Activated T-helper 2 cell treated with anti-CD3 and anti-CD28 coated beads, Interferon-gamma antibody, Interleukin-2, Interleukin-4, amounts not matched to agents 10 μg/mL and 5 μg/mL and 100 μg/mL, durations not matched to agents 14 hours and 24 hours and 36 hours (primary cell): ENCODE measurements at regions of chr14 and their contacts with region 1.

Region 1: DNA sequence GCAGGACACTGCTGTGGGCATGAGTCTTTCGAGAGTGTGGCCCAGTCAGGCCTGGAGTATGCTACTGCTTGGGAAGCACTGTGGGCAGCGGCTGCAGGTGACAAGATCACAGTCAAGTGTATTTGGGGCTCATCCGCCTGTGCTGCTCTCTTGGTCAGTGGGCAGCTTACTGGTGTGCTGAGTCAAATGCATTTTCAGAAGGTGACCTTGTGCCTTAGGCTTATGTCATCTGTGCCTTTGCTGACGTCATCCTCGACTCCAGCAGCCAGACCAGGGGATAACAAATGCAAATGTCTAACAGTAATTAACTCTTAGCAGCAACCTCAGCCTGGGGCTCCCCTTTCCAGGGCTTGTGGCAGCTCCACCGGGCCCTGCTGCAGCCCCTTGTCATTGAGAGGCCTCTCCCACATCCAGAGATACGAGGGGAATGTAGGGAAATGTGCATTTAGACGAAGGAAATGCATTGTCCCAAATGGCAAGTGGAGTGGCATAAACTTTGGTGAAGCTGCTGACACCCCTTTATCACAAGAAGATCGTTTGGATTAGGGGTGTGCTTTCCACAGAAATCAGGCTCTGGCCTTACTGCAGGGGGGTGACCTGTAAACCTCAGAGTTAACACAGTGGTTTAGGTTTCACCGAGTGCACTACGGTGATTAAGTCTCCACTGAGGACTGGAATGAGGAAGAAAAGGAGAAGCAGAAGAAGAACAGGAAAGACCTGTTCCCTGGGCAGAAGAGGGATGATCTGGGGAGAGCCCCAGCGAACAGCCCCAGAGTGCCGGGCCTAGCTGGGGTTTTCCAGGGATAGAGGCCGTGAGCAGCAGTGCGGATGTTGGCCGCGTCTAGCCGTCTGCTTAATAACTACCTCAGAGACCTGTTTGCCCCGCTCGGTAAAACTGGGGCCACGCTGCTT is 39.7 kb downstream of the PSMA6 start:
- DNase-seq: no peak
- H3K4me3 Mint-ChIP-seq: no peak overlapping the region
- H3K27ac Mint-ChIP-seq: peak overlapping the region; percentile 96
- H3K4me1 Mint-ChIP-seq: peaks cover 32% of the 10 kb centered on the region
- H3K27me3 Mint-ChIP-seq: no peaks in the 10 kb centered on the region

Region 2: GRCh38 chr14:35285168-35286002 is 46.5 kb before region 1 on chr14:
- intact Hi-C with region 1: loop called (anchors 1 kb)
- DNase-seq: no peak
- H3K4me3 Mint-ChIP-seq: peak overlapping the region; percentile 55
- H3K27ac Mint-ChIP-seq: peak overlapping the region; percentile 82
- H3K4me1 Mint-ChIP-seq: peaks cover 41% of the 10 kb centered on the region
- H3K27me3 Mint-ChIP-seq: no peaks in the 10 kb centered on the region

Region 3: GRCh38 chr14:35320472-35320871 is 11.4 kb before region 1 on chr14:
- intact Hi-C with region 1: loop called (anchors 1 kb)
- DNase-seq: no peak
- H3K4me3 Mint-ChIP-seq: no peak overlapping the region
- H3K27ac Mint-ChIP-seq: no peak overlapping the region
- H3K4me1 Mint-ChIP-seq: peaks cover 4% of the 10 kb centered on the region
- H3K27me3 Mint-ChIP-seq: no peaks in the 10 kb centered on the region

Region 4: GRCh38 chr14:35355981-35356841 is 24.4 kb after region 1 on chr14:
- intact Hi-C with region 1: loop called (anchors 1 kb)
- DNase-seq: no peak
- H3K4me3 Mint-ChIP-seq: peak overlapping the region; percentile 0
- H3K27ac Mint-ChIP-seq: peak overlapping the region; percentile 87
- H3K4me1 Mint-ChIP-seq: peaks cover 29% of the 10 kb centered on the region
- H3K27me3 Mint-ChIP-seq: no peaks in the 10 kb centered on the region

Region 5: DNA sequence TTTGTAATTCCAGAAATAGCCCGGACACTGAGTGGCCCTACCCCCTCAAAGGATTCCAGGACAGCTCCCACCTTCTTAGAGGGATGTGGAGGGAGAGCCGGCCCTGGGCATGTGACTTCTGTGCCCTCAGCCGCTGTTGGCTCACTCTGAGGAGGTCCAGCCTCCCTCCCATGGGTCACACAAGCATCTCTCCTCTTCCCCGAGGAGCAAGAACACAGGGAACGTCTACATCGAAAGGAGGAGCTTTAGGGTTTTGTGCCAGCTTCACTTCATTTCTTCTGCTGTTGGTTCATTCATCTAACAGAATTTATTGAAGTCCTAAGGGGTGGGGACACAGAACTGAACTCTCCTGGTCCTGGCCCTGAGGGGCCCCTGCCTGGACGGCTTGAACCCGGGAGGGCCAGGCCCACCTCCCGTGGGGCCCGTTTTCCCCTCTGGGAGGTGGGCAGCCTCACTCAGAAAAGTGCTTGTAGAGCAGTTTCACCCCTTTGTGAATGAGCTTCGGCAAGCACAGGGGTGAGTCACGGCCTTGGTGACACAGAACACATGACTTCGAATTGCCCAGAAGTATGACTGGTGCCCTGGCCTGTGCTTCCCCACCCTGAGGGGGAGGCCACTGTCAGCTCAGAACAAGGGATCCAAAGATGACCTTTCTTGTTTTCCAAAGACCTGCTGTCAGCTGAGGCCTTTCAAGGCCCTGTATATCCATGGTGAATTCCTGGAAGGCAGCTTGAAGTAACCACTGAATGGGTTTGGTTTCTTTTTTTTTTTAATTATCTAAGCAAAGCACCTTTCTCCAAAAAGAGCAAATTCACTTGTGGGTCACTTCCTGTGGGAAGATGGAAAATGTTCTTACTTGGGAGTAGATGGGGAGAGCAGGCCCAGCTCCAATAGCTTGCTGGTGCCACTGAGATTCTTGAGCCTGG is 33.5 kb after region 1 on chr14:
- intact Hi-C with region 1: loop called (anchors 1 kb)
- DNase-seq: peak; percentile 38
- H3K4me3 Mint-ChIP-seq: peak overlapping the region; percentile 64
- H3K27ac Mint-ChIP-seq: peak overlapping the region; percentile 97
- H3K4me1 Mint-ChIP-seq: peaks cover 42% of the 10 kb centered on the region
- H3K27me3 Mint-ChIP-seq: no peaks in the 10 kb centered on the region